ENCODE measurements at regions of chr14 and their contacts with region 1.

Region 1: GRCh38 chr14:80987235-80988032 is 32.0 kb downstream of the TSHR start:
- H3K4me3 ChIP-seq: no peak overlapping the region
- H3K27ac ChIP-seq: no peak overlapping the region
- H3K4me1 ChIP-seq: no peaks in the 10 kb centered on the region
- CTCF ChIP-seq: peak; percentile 77

Region 2: GRCh38 chr14:80954687-80955299 is 32.6 kb before region 1 on chr14:
- CTCF ChIA-PET with region 1: interaction called, 41 read pairs
- POLR2A ChIA-PET with region 1: no interaction called
- H3K4me3 ChIP-seq: peak overlapping the region; percentile 55
- H3K27ac ChIP-seq: no peak overlapping the region; the same call in 1 of the 2 replicates
- H3K4me1 ChIP-seq: no peaks in the 10 kb centered on the region
- CTCF ChIP-seq: peak; percentile 60

Region 3: GRCh38 chr14:81164167-81164774 is 176.8 kb after region 1 on chr14:
- CTCF ChIA-PET with region 1: interaction called, 10 read pairs
- POLR2A ChIA-PET with region 1: no interaction called
- H3K4me3 ChIP-seq: no peak overlapping the region
- H3K27ac ChIP-seq: no peak overlapping the region
- H3K4me1 ChIP-seq: no peaks in the 10 kb centered on the region
- CTCF ChIP-seq: no peak